ENCODE measurements at regions of chr12 and their contacts with region 1.

Region 1: DNA sequence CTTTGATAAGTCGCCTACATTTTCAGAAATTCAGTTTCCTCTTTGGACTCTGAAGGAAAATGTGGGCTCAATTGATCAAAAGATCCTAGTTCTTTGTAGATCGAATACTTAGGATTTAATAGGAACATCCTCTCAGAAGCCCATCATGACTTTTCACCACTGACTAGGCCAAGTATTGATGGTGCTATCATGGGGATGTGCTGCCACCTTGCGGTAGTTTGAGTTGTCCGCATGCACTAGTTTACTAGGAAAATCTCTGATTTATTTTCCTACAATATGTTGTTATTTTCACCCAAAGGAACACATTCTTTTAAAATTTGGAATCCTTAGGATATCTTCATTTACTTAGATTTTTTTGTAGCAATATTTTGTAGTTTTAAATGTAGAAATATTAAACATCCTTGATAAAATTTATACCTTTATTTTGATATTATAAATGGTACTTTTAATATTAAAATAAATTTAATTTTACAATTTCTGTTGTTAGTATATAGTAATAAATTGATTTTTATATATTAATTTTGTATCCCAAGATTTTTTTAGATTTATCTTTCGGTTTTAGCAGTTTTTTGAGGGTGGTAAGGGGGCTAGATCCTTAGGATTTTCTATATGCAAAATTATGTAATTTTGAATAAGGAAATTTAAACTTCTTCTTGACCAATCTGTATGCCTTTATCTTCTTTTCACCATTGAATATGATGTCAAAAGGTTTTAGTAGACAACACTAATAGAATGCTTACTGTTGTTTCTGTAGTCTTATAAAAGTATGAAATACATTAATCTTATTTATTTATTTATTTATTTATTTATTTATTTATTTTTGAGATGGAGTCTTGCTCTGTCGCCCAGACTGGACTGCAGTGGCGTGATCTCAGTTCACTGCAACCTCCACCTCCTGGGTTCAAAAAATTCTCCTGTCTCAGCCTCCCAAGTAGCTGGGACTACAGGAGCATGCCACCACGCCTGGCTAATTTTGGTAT is 52.9 kb upstream of the OR9K2 start:
- ATAC-seq: peak; percentile 59 to 79 (median 68)
- H3K4me3 ChIP-seq: no peak overlapping the region
- H3K27ac ChIP-seq: no peak overlapping the region
- H3K4me1 ChIP-seq: no peaks in the 10 kb centered on the region

Region 2: DNA sequence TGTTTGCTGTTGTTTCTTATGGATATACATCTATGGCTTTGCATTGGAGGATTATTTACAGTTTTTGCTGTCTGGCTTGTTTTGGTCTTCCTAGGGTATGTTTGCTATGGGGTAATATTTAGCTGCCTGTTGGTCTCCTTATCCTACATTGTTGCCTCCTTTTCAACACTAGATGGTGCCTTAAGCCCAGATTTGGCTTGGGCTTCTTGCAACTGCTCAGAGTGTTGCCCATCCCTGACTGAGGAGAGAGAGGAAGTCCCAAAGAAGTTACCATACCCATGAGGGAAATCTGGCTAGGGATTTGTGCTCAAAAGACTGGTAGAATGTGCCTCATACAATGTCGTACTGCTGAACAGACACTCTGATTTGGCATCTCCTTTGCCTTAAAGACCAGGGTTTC is 313.6 kb before region 1 on chr12:
- in situ Hi-C with region 1: loop called in 1 of 9 experiments (anchors 25 kb)
- ATAC-seq: peak in 3 of 8 experiments; percentile 84 to 94 (median 88)
- H3K4me3 ChIP-seq: no peak overlapping the region
- H3K27ac ChIP-seq: no peak overlapping the region
- H3K4me1 ChIP-seq: no peaks in the 10 kb centered on the region

Region 3: DNA sequence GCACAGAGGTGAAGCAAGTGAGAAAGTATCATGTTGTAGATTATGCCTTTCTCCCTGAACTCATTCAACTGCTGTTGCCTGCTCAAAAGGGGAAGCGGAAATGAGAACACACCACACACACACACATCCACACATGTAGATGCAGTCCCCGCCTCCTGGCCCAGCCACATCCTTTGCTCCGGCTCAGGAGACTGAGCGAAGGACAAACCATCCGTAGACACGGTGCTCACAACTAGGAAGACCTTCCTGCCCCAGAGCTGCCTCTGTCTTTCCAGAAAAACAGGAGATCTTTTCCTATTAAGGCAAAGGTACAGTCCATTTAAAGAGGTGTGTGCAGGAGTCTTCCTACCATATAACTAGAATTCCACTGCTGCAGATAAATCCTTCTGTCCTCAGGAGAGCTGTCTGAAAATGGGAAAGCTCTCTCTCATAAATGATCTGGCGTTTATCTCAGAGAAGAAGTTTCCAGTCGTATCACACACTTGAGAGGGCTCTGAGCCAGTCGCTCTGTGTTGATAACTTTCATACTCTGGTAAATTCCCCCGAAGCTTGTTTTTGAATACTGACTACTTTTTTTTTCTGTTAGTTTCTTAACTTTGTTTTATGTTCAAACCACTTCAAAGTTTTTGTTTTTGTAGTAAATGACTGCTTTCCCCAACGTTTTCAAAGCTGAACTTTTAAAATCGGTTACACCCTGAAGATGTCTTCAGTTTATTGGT is 88.5 kb before region 1 on chr12 and contains the start of gene TESPA1:
- in situ Hi-C with region 1: loop called in 6 of 9 experiments (anchors 10 kb)
- ATAC-seq: no peak
- H3K4me3 ChIP-seq: no peak within 1 kb of the TSS
- H3K27ac ChIP-seq: no peak within 1 kb of the TSS
- H3K4me1 ChIP-seq: no peaks in the 10 kb centered on the region
- total RNA-seq, gene TESPA1: 0.09 to 0.52 (median 0.16) TPM in 6 of 8 experiments, not detected in the others

Region 4: GRCh38 chr12:54993161-54993835 is 80.0 kb before region 1 on chr12:
- in situ Hi-C with region 1: loop called in 6 of 9 experiments (anchors 10 kb)
- ATAC-seq: peak; percentile 69 to 97 (median 83)
- H3K4me3 ChIP-seq: no peak overlapping the region
- H3K27ac ChIP-seq: no peak overlapping the region
- H3K4me1 ChIP-seq: peaks cover 13 to 14% of the 10 kb centered on the region in 2 donors

Region 5: DNA sequence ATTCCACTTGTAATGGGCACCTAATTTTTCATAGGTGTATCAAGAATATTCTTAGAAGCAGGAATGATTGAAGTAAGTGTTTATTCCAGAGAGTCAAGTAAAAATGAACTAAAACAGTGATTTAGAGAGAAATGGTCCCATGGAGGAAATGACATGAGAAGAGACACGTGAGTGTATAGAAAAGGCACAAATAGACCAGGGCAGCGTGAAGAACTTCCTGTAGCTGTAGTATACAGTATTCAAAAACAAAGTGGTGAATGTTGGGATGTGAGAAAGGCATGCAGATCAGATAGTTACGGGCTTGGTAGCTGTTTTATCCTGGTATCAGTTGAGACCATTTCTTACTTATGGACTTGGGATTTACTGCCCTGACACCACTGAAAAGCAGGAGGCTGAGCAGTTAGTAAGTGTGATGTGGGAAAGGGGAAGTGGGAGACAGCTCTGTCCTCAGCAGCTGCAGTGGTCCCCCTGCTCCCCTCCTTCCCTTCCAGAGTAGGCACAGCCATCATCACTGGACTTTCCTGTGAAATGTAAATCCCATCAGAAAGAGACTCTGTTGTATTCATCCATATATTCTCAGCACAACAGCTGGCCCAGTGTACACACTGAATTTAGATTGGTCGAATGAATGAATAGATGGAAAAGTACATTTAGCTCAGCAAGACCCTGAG is 72.0 kb before region 1 on chr12:
- in situ Hi-C with region 1: loop called in 7 of 9 experiments (anchors 5 to 10 kb)
- ATAC-seq: no peak
- H3K4me3 ChIP-seq: no peak overlapping the region
- H3K27ac ChIP-seq: no peak overlapping the region
- H3K4me1 ChIP-seq: peaks cover 14 to 23% of the 10 kb centered on the region in 2 donors

Region 6: DNA sequence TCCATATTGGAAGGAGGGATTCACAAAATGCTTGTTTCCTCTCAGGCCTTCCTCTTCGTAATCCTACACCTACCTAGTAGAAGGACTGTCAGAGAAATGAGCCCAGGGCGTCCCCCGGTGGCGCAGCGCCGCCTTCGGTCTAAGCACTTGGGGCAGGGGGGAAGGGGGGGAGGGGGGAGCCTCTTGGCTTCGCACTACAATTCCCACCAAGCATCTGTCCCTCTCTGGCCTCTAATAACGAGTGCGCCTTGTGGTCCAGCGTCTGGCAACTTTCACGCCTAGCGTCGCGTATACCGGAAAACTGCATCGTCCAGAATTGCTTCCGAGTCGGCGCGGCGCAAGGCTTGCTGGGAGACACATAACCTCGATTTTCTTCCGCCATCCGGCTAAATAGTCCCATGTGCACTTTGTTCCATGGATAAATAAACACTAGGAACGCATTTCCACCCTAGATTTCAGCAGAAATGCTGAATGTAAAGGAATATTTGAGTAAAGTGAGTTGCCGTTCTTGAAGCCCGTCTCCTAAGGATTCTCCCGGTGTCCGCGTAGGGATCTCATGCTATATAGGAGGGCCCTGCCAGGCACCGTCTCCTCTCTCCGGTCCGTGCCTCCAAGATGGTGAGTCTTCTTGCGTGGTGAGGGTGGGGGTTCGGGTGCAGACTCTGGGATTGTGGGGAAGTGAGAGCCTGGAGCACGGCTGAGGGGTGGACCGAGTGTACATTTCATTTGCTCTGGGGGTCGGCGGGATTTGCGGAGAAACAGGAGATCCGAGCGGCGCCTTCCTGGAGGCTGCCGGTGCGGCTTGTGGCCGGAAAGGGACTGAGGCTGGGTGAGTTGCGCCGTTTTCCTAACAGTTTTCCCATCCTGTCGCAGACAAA is 968.5 kb after region 1 on chr12 and contains the start of gene RPS26:
- in situ Hi-C with region 1: no loop called
- ATAC-seq: peak; percentile 89 to 97 (median 96)
- H3K4me3 ChIP-seq: peak within 1 kb of the TSS; percentile 63 to 99 (median 83)
- H3K27ac ChIP-seq: peak within 1 kb of the TSS; percentile 98 to 99
- H3K4me1 ChIP-seq: peaks cover 10 to 14% of the 10 kb centered on the region in 2 donors
- total RNA-seq, gene RPS26: 282 to 1,536 (median 616) TPM

Measured in motor neuron (in vitro differentiated cells).